Naive thymus-derived CD4-positive, alpha-beta T cell (primary cell): ENCODE measurements at regions of chr11 and their contacts with region 1.

Region 1: DNA sequence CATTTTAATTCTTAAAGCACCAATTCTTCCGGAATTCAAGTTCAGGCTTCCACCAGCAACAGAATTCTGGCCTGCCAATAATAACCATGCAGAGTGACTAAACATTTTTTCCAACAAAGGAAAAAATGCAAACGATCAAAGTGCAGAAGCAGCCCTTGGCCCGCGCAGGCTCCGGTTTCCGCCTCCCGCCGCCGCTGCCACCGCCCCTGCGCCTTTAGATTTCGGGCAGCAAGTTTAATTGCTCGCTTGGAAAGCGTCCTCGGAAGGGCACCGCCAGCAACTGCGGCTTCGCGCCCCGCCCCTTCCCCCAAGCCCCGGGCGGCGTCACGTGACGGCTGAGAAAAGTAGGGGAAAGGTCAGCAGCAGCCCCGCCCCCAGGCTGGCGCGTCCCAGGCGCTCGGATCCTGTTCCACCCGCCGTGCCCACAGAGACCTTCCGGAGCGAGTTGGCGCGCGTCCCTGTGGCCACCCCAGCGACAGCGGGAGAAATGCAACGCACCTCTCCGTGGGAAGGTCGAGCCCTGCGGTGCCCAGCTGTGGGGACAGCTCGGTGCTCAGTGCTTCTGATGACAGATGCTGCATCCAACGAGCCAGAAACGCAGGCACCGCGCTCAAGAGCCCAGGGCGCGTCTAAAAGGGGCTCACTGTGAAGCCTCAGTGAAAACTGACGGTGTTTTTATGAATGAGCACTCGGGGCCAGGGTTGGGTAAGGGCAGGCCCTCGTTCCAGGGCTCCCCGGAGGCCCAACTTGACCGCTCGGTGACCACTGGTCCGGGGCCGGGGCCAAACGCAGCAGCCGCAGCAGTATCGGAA is 2.5 kb downstream of the CPT1A start:
- DNase-seq: peak; percentile 87 to 94 (median 92)
- ATAC-seq: peak; percentile 88
- H3K4me3 ChIP-seq: peak overlapping the region; percentile 81
- H3K4me3 Mint-ChIP-seq: peak overlapping the region; percentile 85 to 93 (median 90)
- H3K27ac ChIP-seq: peak overlapping the region; percentile 73
- H3K27ac Mint-ChIP-seq: peak overlapping the region; percentile 81 to 95 (median 93)
- H3K4me1 ChIP-seq: peaks cover 49% of the 10 kb centered on the region in 2 donors
- H3K4me1 Mint-ChIP-seq: peaks cover 31 to 70% (median 52%) of the 10 kb centered on the region in 7 donors
- H3K27me3 ChIP-seq: no peaks in the 10 kb centered on the region
- H3K27me3 Mint-ChIP-seq: peaks cover 0 to 2% (median 0%) of the 10 kb centered on the region in 5 donors

Region 2: GRCh38 chr11:68632802-68633201 is 206.5 kb before region 1 on chr11:
- CTCF ChIA-PET with region 1: no interaction called
- POLR2A ChIA-PET with region 1: no interaction called
- intact Hi-C with region 1: loop called in 1 of 2 experiments (anchors 5 kb)
- DNase-seq: peak in 7 of 9 donors; percentile 22 to 50 (median 38)
- ATAC-seq: peak; percentile 40
- H3K4me3 ChIP-seq: no peak overlapping the region
- H3K4me3 Mint-ChIP-seq: no peak overlapping the region
- H3K27ac ChIP-seq: no peak overlapping the region
- H3K27ac Mint-ChIP-seq: no peak overlapping the region
- H3K4me1 ChIP-seq: no peaks in the 10 kb centered on the region
- H3K4me1 Mint-ChIP-seq: peaks cover 0 to 1% (median 0%) of the 10 kb centered on the region in 7 donors
- H3K27me3 ChIP-seq: no peaks in the 10 kb centered on the region
- H3K27me3 Mint-ChIP-seq: peaks cover 0 to 30% (median 9%) of the 10 kb centered on the region in 5 donors

Region 3: GRCh38 chr11:68825571-68825970 is 13.7 kb before region 1 on chr11:
- CTCF ChIA-PET with region 1: interaction called, 49 read pairs
- POLR2A ChIA-PET with region 1: interaction called, 33 read pairs
- intact Hi-C with region 1: loop called in 1 of 2 experiments (anchors 1 kb)
- DNase-seq: peak in 7 of 9 donors; percentile 43 to 54 (median 44)
- ATAC-seq: peak; percentile 82
- H3K4me3 ChIP-seq: no peak overlapping the region
- H3K4me3 Mint-ChIP-seq: peak overlapping the region in 5 of 10 donors; percentile 11 to 58 (median 14)
- H3K27ac ChIP-seq: no peak overlapping the region
- H3K27ac Mint-ChIP-seq: peak overlapping the region in 3 of 9 donors; percentile 25 to 74 (median 50)
- H3K4me1 ChIP-seq: peaks cover 3 to 10% of the 10 kb centered on the region in 2 donors
- H3K4me1 Mint-ChIP-seq: peaks cover 14 to 46% (median 32%) of the 10 kb centered on the region in 7 donors
- H3K27me3 ChIP-seq: no peaks in the 10 kb centered on the region
- H3K27me3 Mint-ChIP-seq: no peaks in the 10 kb centered on the region

Region 4: GRCh38 chr11:69048718-69049489 is 209.6 kb after region 1 on chr11 and contains the start of gene TPCN2:
- CTCF ChIA-PET with region 1: no interaction called
- POLR2A ChIA-PET with region 1: no interaction called
- intact Hi-C with region 1: loop called (anchors 1 to 5 kb)
- DNase-seq: peak; percentile 87 to 93 (median 91)
- ATAC-seq: peak; percentile 99
- H3K4me3 ChIP-seq: peak within 1 kb of the TSS; percentile 85
- H3K4me3 Mint-ChIP-seq: peak within 1 kb of the TSS; percentile 75 to 87 (median 82)
- H3K27ac ChIP-seq: peak within 1 kb of the TSS; percentile 98
- H3K27ac Mint-ChIP-seq: peak within 1 kb of the TSS; percentile 82 to 94 (median 89)
- H3K4me1 ChIP-seq: peaks cover 12 to 16% of the 10 kb centered on the region in 2 donors
- H3K4me1 Mint-ChIP-seq: peaks cover 4 to 35% (median 29%) of the 10 kb centered on the region in 7 donors
- H3K27me3 ChIP-seq: no peaks in the 10 kb centered on the region
- H3K27me3 Mint-ChIP-seq: peaks cover 0 to 27% (median 0%) of the 10 kb centered on the region in 5 donors
- total RNA-seq, gene TPCN2: 11.9 to 29.4 (median 21.3) TPM

Region 5: GRCh38 chr11:69296890-69297786 is 457.9 kb after region 1 on chr11:
- CTCF ChIA-PET with region 1: no interaction called
- POLR2A ChIA-PET with region 1: no interaction called
- intact Hi-C with region 1: loop called in 1 of 2 experiments (anchors 5 kb)
- DNase-seq: peak; percentile 48 to 86 (median 63)
- ATAC-seq: peak; percentile 68
- H3K4me3 ChIP-seq: peak overlapping the region; percentile 39
- H3K4me3 Mint-ChIP-seq: peak overlapping the region; percentile 35 to 90 (median 87)
- H3K27ac ChIP-seq: peak overlapping the region; percentile 49
- H3K27ac Mint-ChIP-seq: peak overlapping the region; percentile 4 to 93 (median 86)
- H3K4me1 ChIP-seq: peaks cover 36 to 37% of the 10 kb centered on the region in 2 donors
- H3K4me1 Mint-ChIP-seq: peaks cover 33 to 68% (median 56%) of the 10 kb centered on the region in 7 donors
- H3K27me3 ChIP-seq: no peaks in the 10 kb centered on the region
- H3K27me3 Mint-ChIP-seq: no peaks in the 10 kb centered on the region

Region 6: DNA sequence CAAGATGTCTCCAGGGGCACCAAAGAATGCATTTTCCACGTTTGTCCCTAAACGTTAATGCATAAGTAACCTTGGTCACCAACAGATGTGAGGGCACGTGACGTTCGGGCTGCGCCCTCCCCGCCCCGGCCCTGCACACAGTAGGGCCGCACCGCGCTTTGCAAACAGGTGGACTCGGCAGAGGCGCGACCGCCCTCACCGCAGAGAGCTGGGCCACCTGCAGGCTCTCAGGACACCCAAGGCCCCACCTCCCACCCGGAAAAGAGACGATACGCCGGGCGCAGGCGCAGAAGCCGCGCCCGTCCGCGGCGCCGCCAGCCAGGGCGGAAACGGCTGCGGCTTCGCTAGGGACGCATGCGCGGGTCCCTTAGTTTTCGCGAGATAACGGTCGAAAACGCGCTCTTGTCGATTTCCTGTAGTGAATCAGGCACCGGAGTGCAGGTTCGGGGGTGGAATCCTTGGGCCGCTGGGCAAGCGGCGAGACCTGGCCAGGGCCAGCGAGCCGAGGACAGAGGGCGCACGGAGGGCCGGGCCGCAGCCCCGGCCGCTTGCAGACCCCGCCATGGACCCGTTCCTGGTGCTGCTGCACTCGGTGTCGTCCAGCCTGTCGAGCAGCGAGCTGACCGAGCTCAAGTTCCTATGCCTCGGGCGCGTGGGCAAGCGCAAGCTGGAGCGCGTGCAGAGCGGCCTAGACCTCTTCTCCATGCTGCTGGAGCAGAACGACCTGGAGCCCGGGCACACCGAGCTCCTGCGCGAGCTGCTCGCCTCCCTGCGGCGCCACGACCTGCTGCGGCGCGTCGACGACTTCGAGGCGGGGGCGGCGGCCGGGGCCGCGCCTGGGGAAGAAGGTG is 1363.9 kb after region 1 on chr11 and contains the start of gene FADD:
- CTCF ChIA-PET with region 1: no interaction called
- POLR2A ChIA-PET with region 1: no interaction called
- intact Hi-C with region 1: loop called in 1 of 2 experiments (anchors 5 kb)
- DNase-seq: peak; percentile 86 to 93 (median 90)
- ATAC-seq: peak; percentile 77
- H3K4me3 ChIP-seq: peak within 1 kb of the TSS; percentile 97
- H3K4me3 Mint-ChIP-seq: peak within 1 kb of the TSS; percentile 92 to 99 (median 96)
- H3K27ac ChIP-seq: peak within 1 kb of the TSS; percentile 81
- H3K27ac Mint-ChIP-seq: peak within 1 kb of the TSS; percentile 93 to 99 (median 97)
- H3K4me1 ChIP-seq: peaks cover 21 to 34% of the 10 kb centered on the region in 2 donors
- H3K4me1 Mint-ChIP-seq: peaks cover 28 to 54% (median 36%) of the 10 kb centered on the region in 7 donors
- H3K27me3 ChIP-seq: no peaks in the 10 kb centered on the region
- H3K27me3 Mint-ChIP-seq: peaks cover 0 to 6% (median 0%) of the 10 kb centered on the region in 5 donors
- total RNA-seq, gene FADD: 9.6 to 40.9 (median 38.4) TPM